ENCODE measurements at regions of chr11 and their contacts with region 1.

Region 1: DNA sequence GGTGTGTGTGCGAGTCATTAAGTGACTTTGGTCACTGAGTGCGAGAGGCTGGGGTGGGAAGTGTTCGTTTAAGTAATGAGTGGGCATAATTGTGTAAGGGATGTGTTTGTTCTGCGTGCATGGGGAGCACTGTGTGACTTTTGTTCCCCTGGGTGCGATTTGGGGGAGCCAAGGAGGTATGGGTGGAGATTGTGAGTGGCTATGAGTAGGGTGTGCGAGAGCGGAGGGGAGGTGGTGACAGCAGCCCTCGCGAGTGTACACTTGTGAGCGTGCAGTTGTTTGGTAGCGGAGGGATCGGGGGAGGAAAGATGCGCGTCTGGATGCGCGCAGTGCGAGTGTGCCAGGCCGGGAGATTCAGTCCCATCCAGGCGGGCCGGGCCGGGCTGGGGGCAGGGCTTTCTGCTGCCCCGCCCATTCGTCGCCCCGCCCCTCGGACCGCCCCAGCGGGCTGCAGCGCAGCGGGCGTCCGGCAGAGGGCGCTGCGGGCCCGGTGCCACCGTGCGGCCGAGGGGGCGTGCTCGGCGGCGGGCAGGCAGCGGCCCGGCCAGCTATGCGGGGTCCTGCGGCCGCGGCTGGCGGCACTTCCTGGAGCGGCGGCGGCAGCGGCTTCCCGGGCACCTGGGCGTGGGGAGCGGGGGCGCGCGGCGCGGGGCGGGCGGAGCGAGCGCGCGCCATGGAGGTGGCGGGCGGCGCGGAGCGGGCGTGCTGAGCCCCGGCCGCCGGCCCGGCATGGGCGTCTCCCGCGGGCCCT is at the start of gene DGKZ:
- DNase-seq: peak; percentile 87 to 99 (median 95)
- H3K4me3 ChIP-seq: peak within 1 kb of the TSS; percentile 83 to 89
- H3K4me3 Mint-ChIP-seq: peak within 1 kb of the TSS; percentile 92 to 99 (median 94)
- H3K27ac ChIP-seq: peak within 1 kb of the TSS; percentile 83
- H3K27ac Mint-ChIP-seq: peak within 1 kb of the TSS; percentile 89 to 97 (median 94)
- H3K4me1 ChIP-seq: peaks cover 84% of the 10 kb centered on the region
- H3K4me1 Mint-ChIP-seq: peaks cover 49 to 94% (median 76%) of the 10 kb centered on the region in 4 donors
- H3K27me3 ChIP-seq: no peaks in the 10 kb centered on the region
- H3K27me3 Mint-ChIP-seq: peaks cover 0 to 2% of the 10 kb centered on the region in 2 donors
- total RNA-seq, gene DGKZ: 230 to 235 TPM

Region 2: GRCh38 chr11:46121724-46122477 is 225.2 kb before region 1 on chr11:
- CTCF ChIA-PET with region 1: no interaction called
- POLR2A ChIA-PET with region 1: interaction called, 3 read pairs
- intact Hi-C with region 1: loop called (anchors 2 kb)
- DNase-seq: peak; percentile 82 to 86 (median 84)
- H3K4me3 ChIP-seq: peak overlapping the region; percentile 42 to 60
- H3K4me3 Mint-ChIP-seq: peak overlapping the region; percentile 86 to 94 (median 92)
- H3K27ac ChIP-seq: peak overlapping the region; percentile 60
- H3K27ac Mint-ChIP-seq: peak overlapping the region; percentile 87 to 98 (median 94)
- H3K4me1 ChIP-seq: peaks cover 35% of the 10 kb centered on the region
- H3K4me1 Mint-ChIP-seq: peaks cover 27 to 51% (median 34%) of the 10 kb centered on the region in 4 donors
- H3K27me3 ChIP-seq: no peaks in the 10 kb centered on the region
- H3K27me3 Mint-ChIP-seq: peaks cover 0 to 3% of the 10 kb centered on the region in 2 donors

Region 3: DNA sequence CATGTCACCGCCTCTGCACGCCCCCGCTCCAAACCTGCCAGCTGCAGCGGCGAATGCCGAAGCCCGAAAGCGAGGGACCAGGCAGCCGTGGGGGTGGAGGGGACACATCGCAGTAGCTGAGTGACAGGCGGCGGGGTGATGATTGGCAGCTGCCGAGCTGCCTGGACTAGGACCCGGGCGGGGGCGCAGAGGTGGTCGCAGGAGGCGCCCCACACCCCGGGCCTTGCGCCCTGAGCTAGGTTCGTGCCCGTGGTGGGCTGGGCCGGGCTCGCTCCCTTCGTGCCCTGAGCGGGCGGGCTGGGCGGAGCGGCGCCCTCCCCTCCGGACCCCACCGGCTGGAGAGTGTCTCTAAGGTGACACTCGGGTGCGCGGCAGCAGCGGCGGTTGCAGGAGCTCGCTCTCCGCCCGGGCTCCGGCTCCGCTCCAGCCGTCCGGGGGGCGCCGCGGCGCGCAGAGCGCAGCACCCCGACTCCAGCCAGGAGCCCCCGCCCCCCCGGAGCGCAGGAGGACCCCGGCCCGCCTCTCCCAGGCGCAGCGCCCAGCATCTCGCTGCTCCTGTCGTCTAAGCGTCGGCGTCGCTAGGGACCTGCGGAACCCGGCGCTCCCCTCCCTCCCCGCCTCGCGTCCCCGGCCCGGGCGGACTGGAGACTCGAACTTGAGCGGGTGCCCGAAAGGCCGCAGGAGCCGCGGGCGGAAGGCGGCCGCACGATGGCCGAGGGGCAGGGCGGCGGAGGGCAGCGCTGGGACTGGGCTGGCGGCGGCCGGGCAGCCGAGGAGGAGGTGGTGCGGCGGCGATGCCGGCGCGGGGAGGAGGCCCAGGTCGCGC is 14.3 kb before region 1 on chr11:
- CTCF ChIA-PET with region 1: interaction called, 34 read pairs
- POLR2A ChIA-PET with region 1: interaction called, 262 read pairs
- intact Hi-C with region 1: loop called (anchors 1 kb)
- DNase-seq: peak in 4 of 5 donors; percentile 30 to 59 (median 44)
- H3K4me3 ChIP-seq: peak overlapping the region; percentile 15 to 54
- H3K4me3 Mint-ChIP-seq: peak overlapping the region; percentile 87 to 96 (median 90)
- H3K27ac ChIP-seq: peak overlapping the region; percentile 42
- H3K27ac Mint-ChIP-seq: peak overlapping the region in 6 of 7 donors; percentile 84 to 98 (median 96)
- H3K4me1 ChIP-seq: peaks cover 74% of the 10 kb centered on the region
- H3K4me1 Mint-ChIP-seq: peaks cover 33 to 74% (median 61%) of the 10 kb centered on the region in 4 donors
- H3K27me3 ChIP-seq: no peaks in the 10 kb centered on the region
- H3K27me3 Mint-ChIP-seq: no peaks in the 10 kb centered on the region

Region 4: DNA sequence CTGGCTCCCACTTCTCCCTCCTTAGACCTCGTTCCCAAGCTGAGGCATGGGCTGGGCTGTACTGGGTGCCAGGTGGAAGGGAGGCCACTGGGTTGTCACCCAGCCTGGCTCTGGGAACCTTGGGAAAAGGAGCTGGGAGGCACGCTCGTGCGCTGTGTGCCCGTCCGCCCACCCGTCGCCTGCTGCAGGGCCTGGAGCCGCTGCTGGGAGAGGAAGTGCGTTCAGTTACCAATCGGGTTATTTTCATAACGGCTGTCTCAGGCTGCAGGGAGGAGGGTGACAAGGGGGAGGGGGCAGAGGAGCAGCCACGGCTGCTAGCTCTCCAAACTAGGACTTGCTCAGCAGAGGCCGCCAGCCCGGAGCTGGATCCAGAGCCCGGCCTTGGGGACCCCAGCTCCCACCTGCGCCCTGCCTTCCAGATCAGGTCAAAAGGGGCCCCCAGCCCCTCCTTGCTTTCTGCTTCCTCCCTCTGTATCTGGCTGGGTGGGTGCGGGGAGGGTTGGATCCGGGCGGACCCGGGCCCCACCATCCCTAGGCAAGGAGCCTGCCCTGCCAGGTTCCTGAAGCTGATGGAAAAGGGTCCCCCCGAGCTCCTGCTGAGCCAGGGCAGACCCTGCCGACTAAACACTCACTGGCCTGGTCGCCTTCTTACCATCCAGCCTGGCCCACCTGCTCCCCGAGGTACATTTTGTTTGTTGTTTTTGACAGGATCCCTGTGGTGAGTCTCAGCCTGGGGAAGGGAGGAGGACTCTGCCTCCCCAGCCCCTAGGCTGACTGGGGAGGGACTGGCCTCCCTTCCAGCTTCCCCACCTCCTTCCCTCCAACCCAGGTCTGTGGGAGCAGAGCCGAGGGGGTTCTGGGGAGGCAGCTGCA is 14.5 kb after region 1 on chr11:
- CTCF ChIA-PET with region 1: interaction called, 469 read pairs
- POLR2A ChIA-PET with region 1: interaction called, 334 read pairs
- intact Hi-C with region 1: loop called (anchors 1 kb)
- DNase-seq: peak; percentile 58 to 82 (median 63)
- H3K4me3 ChIP-seq: peak overlapping the region; percentile 68 to 69
- H3K4me3 Mint-ChIP-seq: peak overlapping the region; percentile 82 to 91 (median 86)
- H3K27ac ChIP-seq: peak overlapping the region; percentile 57
- H3K27ac Mint-ChIP-seq: peak overlapping the region; percentile 74 to 95 (median 92)
- H3K4me1 ChIP-seq: peaks cover 86% of the 10 kb centered on the region
- H3K4me1 Mint-ChIP-seq: peaks cover 36 to 85% (median 62%) of the 10 kb centered on the region in 4 donors
- H3K27me3 ChIP-seq: no peaks in the 10 kb centered on the region
- H3K27me3 Mint-ChIP-seq: no peaks in the 10 kb centered on the region

Region 5: GRCh38 chr11:46367244-46367915 is 20.3 kb after region 1 on chr11:
- CTCF ChIA-PET with region 1: interaction called, 469 read pairs
- POLR2A ChIA-PET with region 1: interaction called, 334 read pairs
- intact Hi-C with region 1: loop called (anchors 1 kb)
- DNase-seq: peak; percentile 68 to 74 (median 73)
- H3K4me3 ChIP-seq: no peak overlapping the region
- H3K4me3 Mint-ChIP-seq: no peak overlapping the region
- H3K27ac ChIP-seq: peak overlapping the region; percentile 22
- H3K27ac Mint-ChIP-seq: peak overlapping the region in 3 of 7 donors; percentile 24 to 53 (median 42)
- H3K4me1 ChIP-seq: peaks cover 55% of the 10 kb centered on the region
- H3K4me1 Mint-ChIP-seq: peaks cover 21 to 55% (median 40%) of the 10 kb centered on the region in 4 donors
- H3K27me3 ChIP-seq: no peaks in the 10 kb centered on the region
- H3K27me3 Mint-ChIP-seq: no peaks in the 10 kb centered on the region

Region 6: GRCh38 chr11:46380340-46381047 is 33.4 kb after region 1 on chr11:
- CTCF ChIA-PET with region 1: interaction called, 14 read pairs
- POLR2A ChIA-PET with region 1: interaction called, 34 read pairs
- intact Hi-C with region 1: loop called (anchors 5 kb)
- DNase-seq: peak; percentile 41 to 79 (median 47)
- H3K4me3 ChIP-seq: peak overlapping the region; percentile 29 to 60
- H3K4me3 Mint-ChIP-seq: peak overlapping the region; percentile 80 to 90 (median 82)
- H3K27ac ChIP-seq: peak overlapping the region; percentile 49
- H3K27ac Mint-ChIP-seq: peak overlapping the region; percentile 32 to 86 (median 71)
- H3K4me1 ChIP-seq: peaks cover 12% of the 10 kb centered on the region
- H3K4me1 Mint-ChIP-seq: peaks cover 4 to 9% (median 7%) of the 10 kb centered on the region in 4 donors
- H3K27me3 ChIP-seq: peaks cover 12% of the 10 kb centered on the region
- H3K27me3 Mint-ChIP-seq: peaks cover 3 to 15% of the 10 kb centered on the region in 2 donors

Region 7: GRCh38 chr11:46438211-46438610 is 91.2 kb after region 1 on chr11:
- CTCF ChIA-PET with region 1: no interaction called
- POLR2A ChIA-PET with region 1: no interaction called
- intact Hi-C with region 1: no loop called
- DNase-seq: no peak
- H3K4me3 ChIP-seq: no peak overlapping the region
- H3K4me3 Mint-ChIP-seq: no peak overlapping the region
- H3K27ac ChIP-seq: no peak overlapping the region
- H3K27ac Mint-ChIP-seq: no peak overlapping the region
- H3K4me1 ChIP-seq: no peaks in the 10 kb centered on the region
- H3K4me1 Mint-ChIP-seq: peaks cover 0 to 2% (median 0%) of the 10 kb centered on the region in 4 donors
- H3K27me3 ChIP-seq: no peaks in the 10 kb centered on the region
- H3K27me3 Mint-ChIP-seq: no peaks in the 10 kb centered on the region

Region 8: GRCh38 chr11:46529095-46529905 is 182.2 kb after region 1 on chr11:
- CTCF ChIA-PET with region 1: interaction called, 10 read pairs
- POLR2A ChIA-PET with region 1: no interaction called
- intact Hi-C with region 1: loop called (anchors 2 kb)
- DNase-seq: peak; percentile 64 to 78 (median 67)
- H3K4me3 ChIP-seq: no peak overlapping the region
- H3K4me3 Mint-ChIP-seq: no peak overlapping the region
- H3K27ac ChIP-seq: no peak overlapping the region
- H3K27ac Mint-ChIP-seq: peak overlapping the region in 4 of 7 donors; percentile 10 to 86 (median 53)
- H3K4me1 ChIP-seq: peaks cover 12% of the 10 kb centered on the region
- H3K4me1 Mint-ChIP-seq: peaks cover 28 to 50% (median 38%) of the 10 kb centered on the region in 4 donors
- H3K27me3 ChIP-seq: no peaks in the 10 kb centered on the region
- H3K27me3 Mint-ChIP-seq: no peaks in the 10 kb centered on the region